ENCODE measurements at regions of chr6 and their contacts with region 1.

Region 1: GRCh38 chr6:10886691-10887535 is at the start of gene SYCP2L:
- DNase-seq: peak; percentile 78 to 95 (median 82)
- ATAC-seq: peak; percentile 93
- H3K4me3 ChIP-seq: peak within 1 kb of the TSS; percentile 79
- H3K27ac ChIP-seq: peak within 1 kb of the TSS; percentile 91
- H3K4me1 ChIP-seq: peaks cover 13 to 20% of the 10 kb centered on the region in 2 experiments
- H3K27me3 ChIP-seq: no peaks in the 10 kb centered on the region
- CTCF ChIP-seq: peak; percentile 74 to 89 (median 83)
- EP300 ChIP-seq: peak; percentile 55; the same call in 1 of the 2 replicates
- POLR2A ChIP-seq: peak; percentile 97
- RAD21 ChIP-seq: peak in 1 of 2 experiments; percentile 25; a peak in 1 of 4 replicates
- polyA plus RNA-seq, gene SYCP2L: 12.4 to 16.2 TPM

Region 2: DNA sequence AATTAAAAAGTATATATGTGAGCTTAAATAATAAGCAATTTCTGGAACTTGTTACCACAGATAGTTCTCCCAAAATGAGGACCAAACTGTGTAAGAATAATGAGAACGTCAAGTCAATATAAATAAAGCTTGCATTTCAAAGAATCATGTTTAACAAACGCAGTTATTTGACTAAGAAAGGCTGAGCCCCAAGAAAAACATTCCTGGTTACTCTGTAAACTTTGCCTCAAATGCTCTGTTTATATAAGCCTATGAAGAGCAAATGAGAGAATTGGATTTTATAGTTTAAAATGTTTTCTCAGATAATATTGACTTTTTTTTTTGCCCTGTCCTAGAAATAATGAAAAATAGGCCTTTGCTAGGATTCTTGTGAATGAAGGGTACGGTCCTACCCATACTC is 273.8 kb before region 1 on chr6:
- CTCF ChIA-PET with region 1: no interaction called
- POLR2A ChIA-PET with region 1: no interaction called
- in situ Hi-C with region 1: no loop called
- intact Hi-C with region 1: no loop called
- DNase-seq: no peak
- ATAC-seq: no peak
- H3K4me3 ChIP-seq: no peak overlapping the region
- H3K27ac ChIP-seq: no peak overlapping the region
- H3K4me1 ChIP-seq: no peaks in the 10 kb centered on the region
- H3K27me3 ChIP-seq: peaks cover 0 to 9% of the 10 kb centered on the region in 2 experiments; a peak in 3 of 5 replicates
- CTCF ChIP-seq: no peak
- EP300 ChIP-seq: no peak
- POLR2A ChIP-seq: no peak
- RAD21 ChIP-seq: no peak

Region 3: DNA sequence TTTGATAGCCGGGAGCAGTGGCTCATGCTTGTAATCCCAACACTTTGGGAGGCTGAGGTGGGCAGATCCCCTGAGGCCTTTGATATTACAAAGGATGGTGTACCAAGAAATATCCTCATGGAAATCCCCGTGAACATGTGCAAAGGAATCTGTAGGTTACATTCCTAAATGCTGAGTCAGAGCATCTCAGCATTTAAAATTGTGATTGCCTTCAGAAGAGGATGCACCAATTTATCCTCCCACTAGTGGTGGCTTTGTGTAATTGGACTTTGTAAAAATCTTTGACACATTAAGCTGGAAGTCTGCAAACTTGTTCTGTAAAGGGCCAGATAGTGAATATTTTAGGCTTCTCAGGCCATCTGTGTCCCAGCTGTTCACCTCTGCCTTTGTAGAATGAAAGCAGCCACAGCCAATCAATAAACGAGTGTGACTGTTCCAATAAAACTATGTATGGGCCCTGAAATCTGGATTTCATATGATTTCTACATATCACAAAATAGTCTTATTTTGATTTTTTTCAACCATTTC is 127.5 kb before region 1 on chr6:
- CTCF ChIA-PET with region 1: no interaction called
- POLR2A ChIA-PET with region 1: no interaction called
- in situ Hi-C with region 1: no loop called
- intact Hi-C with region 1: no loop called
- DNase-seq: peak; percentile 51 to 78 (median 58)
- ATAC-seq: peak; percentile 90
- H3K4me3 ChIP-seq: no peak overlapping the region
- H3K27ac ChIP-seq: no peak overlapping the region
- H3K4me1 ChIP-seq: peaks cover 0 to 11% of the 10 kb centered on the region in 2 experiments; a peak in 3 of 5 replicates
- H3K27me3 ChIP-seq: no peaks in the 10 kb centered on the region
- CTCF ChIP-seq: peak; percentile 58 to 81 (median 76)
- EP300 ChIP-seq: peak; percentile 12; the same call in 1 of the 2 replicates
- POLR2A ChIP-seq: no peak
- RAD21 ChIP-seq: peak; percentile 49 to 73; a peak in 3 of 4 replicates

Region 4: DNA sequence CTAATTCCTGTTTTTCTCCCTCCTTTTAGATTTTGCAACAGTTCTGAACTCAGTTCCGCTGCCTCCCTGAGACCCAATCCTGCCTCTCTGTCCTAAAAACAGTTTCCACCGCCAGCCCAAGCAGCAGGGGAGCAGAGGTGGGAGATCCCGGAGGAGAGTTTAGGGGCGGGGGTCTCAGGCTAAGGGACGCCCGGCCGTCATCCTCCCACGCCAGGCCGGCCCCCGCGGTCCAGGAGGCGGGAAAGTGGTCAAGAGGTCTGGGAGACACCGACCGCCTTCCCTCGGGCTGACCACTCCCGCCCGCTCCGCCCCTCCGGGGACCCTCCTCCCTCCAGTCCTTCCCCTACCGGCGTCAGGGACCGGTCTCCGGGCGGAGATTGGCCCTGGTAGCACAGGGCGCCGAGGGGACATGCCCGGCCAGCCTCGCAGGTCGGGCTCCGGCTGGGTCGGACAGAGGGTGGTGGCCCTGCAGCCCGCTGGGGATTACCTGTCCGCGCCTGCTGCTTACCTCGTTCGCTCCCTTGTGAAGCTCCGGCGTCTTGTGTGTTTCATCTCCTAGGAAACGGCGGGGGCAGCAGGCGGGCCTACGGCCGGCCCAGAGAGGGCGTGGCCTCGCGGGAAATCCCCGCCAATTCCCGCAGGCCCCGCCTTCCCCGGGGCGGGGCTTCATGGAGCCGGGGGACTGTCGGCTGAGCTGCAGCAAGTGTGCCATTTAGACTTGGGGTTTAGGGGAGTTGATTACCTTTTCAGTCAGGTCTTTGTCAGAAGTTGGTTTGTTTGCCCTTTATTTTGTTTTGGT is 48.7 kb before region 1 on chr6 and contains the start of gene MAK:
- CTCF ChIA-PET with region 1: no interaction called
- POLR2A ChIA-PET with region 1: interaction called, 6 read pairs
- in situ Hi-C with region 1: no loop called
- intact Hi-C with region 1: loop called (anchors 5 kb)
- DNase-seq: peak; percentile 95 to 99 (median 98)
- ATAC-seq: peak; percentile 95
- H3K4me3 ChIP-seq: peak within 1 kb of the TSS; percentile 63
- H3K27ac ChIP-seq: peak within 1 kb of the TSS; percentile 76
- H3K4me1 ChIP-seq: peaks cover 14 to 15% of the 10 kb centered on the region in 2 experiments
- H3K27me3 ChIP-seq: no peaks in the 10 kb centered on the region
- CTCF ChIP-seq: no peak
- EP300 ChIP-seq: peak; percentile 3; the same call in 1 of the 2 replicates
- POLR2A ChIP-seq: peak; percentile 84
- RAD21 ChIP-seq: no peak
- polyA plus RNA-seq, gene MAK: 0.53 to 1.1 TPM

Region 5: DNA sequence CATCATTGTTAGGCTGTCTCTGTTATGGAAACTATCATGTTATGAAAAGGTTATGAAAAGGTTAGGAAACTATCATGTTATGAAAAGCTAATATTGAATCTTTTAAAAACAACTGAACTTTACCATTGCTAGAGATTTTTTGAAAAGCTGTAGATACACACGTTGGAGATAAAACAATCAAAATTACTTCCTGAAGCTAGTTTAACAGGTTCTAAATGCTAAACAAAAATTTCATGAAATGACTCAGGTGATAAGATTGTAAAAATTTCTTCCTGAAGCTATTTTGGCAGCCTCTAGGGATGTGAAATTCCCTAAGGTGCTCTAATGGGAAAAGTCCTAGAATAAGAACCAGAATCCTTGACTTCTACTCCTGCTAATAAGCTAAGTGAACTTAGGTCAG is 13.6 kb before region 1 on chr6:
- CTCF ChIA-PET with region 1: no interaction called
- POLR2A ChIA-PET with region 1: interaction called, 18 read pairs
- in situ Hi-C with region 1: no loop called
- intact Hi-C with region 1: no loop called
- DNase-seq: no peak
- ATAC-seq: no peak
- H3K4me3 ChIP-seq: no peak overlapping the region
- H3K27ac ChIP-seq: no peak overlapping the region
- H3K4me1 ChIP-seq: peaks cover 0 to 3% of the 10 kb centered on the region in 2 experiments; a peak in 1 of 5 replicates
- H3K27me3 ChIP-seq: no peaks in the 10 kb centered on the region; a peak in 1 of 5 replicates
- CTCF ChIP-seq: no peak
- EP300 ChIP-seq: no peak
- POLR2A ChIP-seq: no peak
- RAD21 ChIP-seq: no peak

Region 6: DNA sequence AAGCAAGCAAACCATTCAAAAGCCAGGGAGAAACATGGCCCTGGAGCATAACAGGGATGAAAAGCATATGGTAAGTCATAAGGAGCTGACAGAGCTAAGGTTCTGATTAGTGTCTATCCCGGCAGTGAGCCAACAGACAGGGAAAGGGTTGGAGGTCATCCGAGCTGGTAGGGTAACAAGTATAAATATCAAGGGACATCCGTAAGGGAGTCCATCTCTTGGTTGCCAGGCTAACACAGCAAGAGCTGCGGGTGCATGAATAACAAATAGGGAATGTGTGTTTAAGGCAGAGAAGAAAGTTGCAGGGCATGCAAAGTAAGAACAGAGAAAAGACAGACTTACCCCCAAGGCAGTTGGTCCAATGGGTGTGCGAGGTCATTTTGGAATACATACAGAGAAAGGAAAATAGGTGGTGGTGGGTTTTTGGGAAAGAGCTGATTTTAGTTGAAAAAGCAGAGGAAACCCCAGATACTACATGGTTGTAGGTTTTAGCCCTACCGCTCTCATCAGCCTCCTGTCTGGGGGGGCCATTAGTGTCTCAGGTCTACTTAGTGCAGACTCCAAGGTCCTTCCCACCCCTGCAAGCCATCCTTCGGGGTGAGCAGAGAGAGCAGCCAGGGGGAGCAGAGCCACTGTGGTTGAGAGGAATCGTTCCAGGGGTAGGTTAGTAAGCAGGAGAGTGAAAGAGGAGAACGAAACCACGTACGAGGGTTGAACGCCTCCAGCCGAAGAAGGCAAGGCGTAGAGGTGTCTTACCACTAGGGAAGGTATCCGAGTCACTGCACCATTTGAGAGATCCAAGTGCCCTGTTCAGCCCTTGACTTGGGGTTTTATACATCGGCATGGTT is 224.2 kb after region 1 on chr6 and contains the start of gene ERVFRD-1:
- CTCF ChIA-PET with region 1: no interaction called
- POLR2A ChIA-PET with region 1: no interaction called
- in situ Hi-C with region 1: no loop called
- intact Hi-C with region 1: no loop called
- DNase-seq: peak in 1 of 4 experiments; percentile 28
- ATAC-seq: peak; percentile 73
- H3K4me3 ChIP-seq: peak within 1 kb of the TSS; percentile 9
- H3K27ac ChIP-seq: peak within 1 kb of the TSS; percentile 32; the same call in 2 of the 3 replicates
- H3K4me1 ChIP-seq: peaks cover 12 to 21% of the 10 kb centered on the region in 2 experiments
- H3K27me3 ChIP-seq: no peaks in the 10 kb centered on the region
- CTCF ChIP-seq: no peak
- EP300 ChIP-seq: no peak
- POLR2A ChIP-seq: no peak
- RAD21 ChIP-seq: no peak
- polyA plus RNA-seq, gene ERVFRD-1: 0.07 to 0.10 TPM

Measured in K562 (cell line).